ENCODE measurements at regions of chr7 and their contacts with region 1.

Region 1: GRCh38 chr7:123712619-123713018 is 36.2 kb downstream of the WASL start:
- DNase-seq: no peak
- ATAC-seq: no peak
- H3K4me3 ChIP-seq: no peak overlapping the region
- H3K27ac ChIP-seq: no peak overlapping the region
- H3K4me1 ChIP-seq: peaks cover 0 to 66% (median 30%) of the 10 kb centered on the region in 9 donors
- H3K27me3 ChIP-seq: no peaks in the 10 kb centered on the region
- CTCF ChIP-seq: no peak

Region 2: GRCh38 chr7:123120286-123120685 is 592.3 kb before region 1 on chr7:
- intact Hi-C with region 1: loop called in 1 of 10 experiments (anchors 10 kb)
- DNase-seq: no peak
- ATAC-seq: no peak
- H3K4me3 ChIP-seq: no peak overlapping the region
- H3K27ac ChIP-seq: no peak overlapping the region
- H3K4me1 ChIP-seq: no peaks in the 10 kb centered on the region
- H3K27me3 ChIP-seq: no peaks in the 10 kb centered on the region
- CTCF ChIP-seq: no peak

Region 3: GRCh38 chr7:123494193-123494796 is 218.3 kb before region 1 on chr7:
- intact Hi-C with region 1: loop called in 1 of 10 experiments (anchors 10 kb)
- DNase-seq: peak in 1 of 2 donors; percentile 26
- ATAC-seq: no peak
- H3K4me3 ChIP-seq: no peak overlapping the region
- H3K27ac ChIP-seq: no peak overlapping the region
- H3K4me1 ChIP-seq: peaks cover 0 to 6% (median 0%) of the 10 kb centered on the region in 9 donors
- H3K27me3 ChIP-seq: no peaks in the 10 kb centered on the region
- CTCF ChIP-seq: peak; percentile 49 to 90 (median 82)

Region 4: GRCh38 chr7:123557398-123558288 is 155.0 kb before region 1 on chr7 and contains the start of gene NDUFA5:
- intact Hi-C with region 1: loop called in 1 of 10 experiments (anchors 10 kb)
- DNase-seq: peak; percentile 90 to 100
- ATAC-seq: peak; percentile 97 to 100 (median 99)
- H3K4me3 ChIP-seq: peak within 1 kb of the TSS; percentile 61 to 92 (median 76)
- H3K27ac ChIP-seq: peak within 1 kb of the TSS; percentile 89 to 96 (median 92)
- H3K4me1 ChIP-seq: peaks cover 3 to 49% (median 39%) of the 10 kb centered on the region in 9 donors
- H3K27me3 ChIP-seq: no peaks in the 10 kb centered on the region
- CTCF ChIP-seq: no peak
- total RNA-seq, gene NDUFA5: 185 to 358 (median 281) TPM

Region 5: DNA sequence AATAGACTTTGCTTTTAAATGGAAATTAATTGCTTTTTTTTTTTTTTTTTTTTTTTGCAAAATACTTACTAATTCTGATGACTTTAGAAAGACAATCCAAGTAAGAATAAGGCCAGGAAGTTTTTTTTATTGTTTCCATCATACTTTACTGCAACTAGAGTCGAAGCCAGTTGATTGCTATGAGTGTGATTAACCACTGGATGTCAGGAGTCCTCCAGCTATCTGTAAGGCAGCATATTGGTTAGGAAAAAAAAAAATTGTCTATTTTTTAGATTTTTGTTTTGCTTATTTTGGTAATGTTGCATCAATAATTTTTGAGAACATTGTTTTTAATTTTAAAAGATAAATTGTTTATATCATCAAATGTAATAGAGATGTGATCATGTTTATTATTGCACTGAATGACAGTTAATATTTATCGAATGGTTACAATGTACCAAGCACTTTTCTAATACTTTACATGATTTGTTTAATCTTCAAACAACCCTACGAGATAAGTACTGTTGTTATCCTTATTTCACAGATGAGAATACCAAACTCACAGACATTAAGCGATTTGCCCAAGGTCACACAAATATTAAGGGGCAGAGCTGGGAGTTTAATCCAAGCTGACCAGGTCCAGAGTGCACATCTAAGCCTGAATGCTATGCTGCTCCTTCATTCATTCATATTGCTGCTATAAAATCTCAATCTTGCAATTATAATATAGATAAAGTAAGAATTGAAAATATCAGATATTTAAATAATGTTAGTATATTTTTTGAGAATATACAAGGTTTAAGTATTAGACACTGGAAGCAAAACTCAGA is 76.9 kb before region 1 on chr7:
- intact Hi-C with region 1: loop called in 2 of 10 experiments (anchors 10 kb)
- DNase-seq: no peak
- ATAC-seq: peak in 7 of 8 donors; percentile 63 to 78 (median 73)
- H3K4me3 ChIP-seq: no peak overlapping the region
- H3K27ac ChIP-seq: peak overlapping the region in 2 of 10 donors; percentile 27 to 70
- H3K4me1 ChIP-seq: peaks cover 3 to 30% (median 9%) of the 10 kb centered on the region in 9 donors
- H3K27me3 ChIP-seq: no peaks in the 10 kb centered on the region
- CTCF ChIP-seq: peak in 8 of 9 donors; percentile 39 to 78 (median 63)

Region 6: GRCh38 chr7:123748734-123749536 is 36.3 kb after region 1 on chr7 and contains the start of gene WASL:
- intact Hi-C with region 1: loop called in 2 of 10 experiments (anchors 5 kb)
- DNase-seq: peak; percentile 91 to 95
- ATAC-seq: peak; percentile 94 to 98 (median 96)
- H3K4me3 ChIP-seq: peak within 1 kb of the TSS; percentile 80 to 95 (median 89)
- H3K27ac ChIP-seq: peak within 1 kb of the TSS; percentile 94 to 99 (median 98)
- H3K4me1 ChIP-seq: peaks cover 0 to 73% (median 59%) of the 10 kb centered on the region in 9 donors
- H3K27me3 ChIP-seq: no peaks in the 10 kb centered on the region
- CTCF ChIP-seq: peak in 5 of 9 donors; percentile 5 to 33 (median 19)
- total RNA-seq, gene WASL: 21.6 to 30.0 (median 25.2) TPM

Region 7: GRCh38 chr7:123761729-123762128 is 49.1 kb after region 1 on chr7:
- intact Hi-C with region 1: no loop called
- DNase-seq: no peak
- ATAC-seq: no peak
- H3K4me3 ChIP-seq: no peak overlapping the region
- H3K27ac ChIP-seq: no peak overlapping the region
- H3K4me1 ChIP-seq: no peaks in the 10 kb centered on the region
- H3K27me3 ChIP-seq: no peaks in the 10 kb centered on the region
- CTCF ChIP-seq: no peak

Region 8: DNA sequence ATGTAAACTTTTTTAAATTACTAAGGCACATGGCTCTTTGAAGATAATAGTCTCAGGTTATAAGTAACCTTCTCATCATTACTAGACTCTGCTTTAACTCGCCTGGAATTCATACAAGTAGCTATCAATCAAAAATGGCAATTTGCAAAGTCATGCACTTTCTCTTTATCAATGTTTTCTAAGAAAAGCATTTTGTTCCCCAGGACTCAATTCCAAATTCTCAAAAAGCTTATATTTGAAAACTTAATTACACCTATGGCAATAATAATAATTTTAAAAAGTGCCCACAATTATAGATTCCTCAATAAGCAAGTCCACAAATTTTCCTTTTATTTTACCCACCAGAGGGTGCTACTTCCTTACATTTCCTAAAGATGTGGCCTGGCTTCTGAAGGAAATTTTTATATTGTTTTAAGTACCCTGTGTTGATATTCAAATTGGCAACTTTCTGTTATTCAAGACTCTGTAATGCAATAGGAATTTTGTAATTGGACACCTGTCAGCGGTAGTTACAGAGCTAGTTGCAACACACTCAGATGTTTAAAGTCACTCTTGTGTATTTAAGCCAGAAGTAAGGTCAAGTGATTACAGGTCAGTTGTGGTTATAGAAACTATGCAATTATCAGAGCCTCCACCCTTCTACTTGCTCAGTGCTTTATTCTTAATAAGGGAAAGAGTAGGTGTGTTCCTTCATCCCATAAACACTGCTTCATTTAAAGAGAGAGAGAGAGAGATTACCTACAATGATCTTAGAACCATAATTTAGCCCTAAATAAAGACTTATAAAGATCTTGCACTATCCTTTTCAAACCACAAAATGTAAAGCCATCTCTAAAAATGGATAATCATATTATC is 85.3 kb after region 1 on chr7:
- intact Hi-C with region 1: no loop called
- DNase-seq: no peak
- ATAC-seq: peak in 7 of 8 donors; percentile 41 to 71 (median 55)
- H3K4me3 ChIP-seq: no peak overlapping the region
- H3K27ac ChIP-seq: no peak overlapping the region
- H3K4me1 ChIP-seq: peaks cover 0 to 4% (median 0%) of the 10 kb centered on the region in 9 donors
- H3K27me3 ChIP-seq: no peaks in the 10 kb centered on the region
- CTCF ChIP-seq: peak; percentile 20 to 75 (median 63)